Pancreas (tissue), 10 donors: ENCODE measurements at regions of chr3 and their contacts with region 1.

Region 1: DNA sequence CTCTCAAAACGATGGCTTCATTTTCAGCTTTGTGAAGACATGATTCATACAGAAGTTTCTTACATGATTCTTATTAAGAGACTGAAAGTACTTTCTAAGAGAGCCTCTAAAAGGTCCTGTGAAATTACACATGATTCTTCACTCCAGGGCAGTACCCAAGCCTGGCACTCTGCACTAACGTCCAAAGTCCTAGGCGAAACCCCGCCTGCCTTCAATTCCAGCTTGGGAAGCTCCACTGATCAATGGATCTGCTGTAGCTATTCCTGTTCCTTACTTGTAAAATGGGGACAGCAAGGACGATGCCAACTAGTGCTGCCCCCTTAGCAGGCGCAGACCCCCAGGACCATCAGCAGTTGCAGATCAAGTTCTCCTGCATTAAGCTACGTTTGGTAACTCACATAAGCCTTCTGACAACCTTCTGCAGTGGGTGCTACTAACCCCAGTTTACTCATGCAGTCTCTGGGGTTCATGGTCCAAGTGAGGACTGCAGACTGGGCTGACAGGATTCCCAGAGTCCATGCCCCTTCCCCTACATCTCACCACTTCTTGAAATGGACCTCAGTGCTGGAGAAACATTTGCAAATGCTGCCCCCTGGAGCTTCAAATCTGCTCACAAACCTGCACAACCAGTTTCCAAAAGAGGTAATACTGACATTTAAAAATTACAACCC is 10.6 kb downstream of the CHCHD4 start:
- DNase-seq: no peak
- ATAC-seq: peak in 2 of 4 donors; percentile 38 to 49
- H3K4me3 ChIP-seq: no peak overlapping the region
- H3K27ac ChIP-seq: no peak overlapping the region
- H3K4me1 ChIP-seq: peaks cover 5 to 14% (median 6%) of the 10 kb centered on the region in 3 donors
- H3K27me3 ChIP-seq: no peaks in the 10 kb centered on the region
- CTCF ChIP-seq: no peak

Region 2: DNA sequence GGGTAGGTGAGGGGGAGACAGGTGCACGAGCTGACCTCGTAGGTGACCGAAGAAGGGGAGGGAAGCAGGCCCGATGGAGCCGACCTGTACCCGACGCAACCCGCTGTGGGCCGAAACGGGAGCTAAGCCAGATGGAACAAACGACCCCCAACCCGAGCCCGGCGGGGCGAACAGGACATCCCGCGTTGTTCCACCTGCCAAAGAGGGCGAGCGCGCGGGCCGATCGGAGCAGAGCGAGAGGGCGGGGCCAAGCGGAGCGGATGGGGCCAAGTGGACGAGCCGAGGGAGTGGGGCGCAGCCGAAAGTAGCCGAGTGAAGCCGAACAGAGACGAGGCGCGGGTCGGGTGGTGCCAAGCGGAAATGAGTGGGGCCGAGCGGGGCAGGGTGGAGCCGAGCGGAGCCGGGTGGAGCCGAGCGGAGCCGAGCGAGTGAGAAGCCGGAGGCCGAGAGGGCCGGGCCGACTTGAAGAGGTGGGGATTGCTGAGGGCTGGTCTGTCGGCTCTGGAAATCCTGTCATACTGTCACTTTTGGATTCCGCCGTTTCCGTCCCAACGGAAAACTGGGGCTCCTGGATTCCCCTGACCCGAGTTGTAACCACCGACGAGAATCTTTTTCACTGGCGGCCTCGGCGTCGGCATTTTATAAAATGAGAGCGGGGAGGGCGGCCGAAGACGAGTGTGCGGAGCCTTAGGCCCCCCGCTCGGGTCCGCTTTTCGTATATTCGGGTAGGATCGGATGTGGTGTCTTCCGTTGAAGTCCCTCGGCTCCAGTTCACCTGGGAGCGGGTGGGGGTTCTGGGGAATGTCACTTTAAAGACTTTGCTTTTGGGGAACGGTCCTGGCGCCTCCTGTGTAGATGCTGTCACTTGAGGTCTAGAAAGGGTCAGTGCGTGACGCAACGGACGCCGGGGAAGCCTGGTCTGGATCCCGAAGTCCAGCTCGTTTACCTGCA is 218.7 kb before region 1 on chr3:
- intact Hi-C with region 1: loop called in 1 of 3 experiments (anchors 10 kb)
- DNase-seq: peak; percentile 93 to 98 (median 96)
- ATAC-seq: peak; percentile 96 to 99 (median 98)
- H3K4me3 ChIP-seq: peak overlapping the region; percentile 24 to 60 (median 52)
- H3K27ac ChIP-seq: no peak overlapping the region
- H3K4me1 ChIP-seq: peaks cover 0 to 7% (median 5%) of the 10 kb centered on the region in 3 donors
- H3K27me3 ChIP-seq: no peaks in the 10 kb centered on the region
- CTCF ChIP-seq: no peak

Region 3: GRCh38 chr3:13972679-13973379 is 141.3 kb before region 1 on chr3:
- intact Hi-C with region 1: no loop called
- DNase-seq: no peak
- ATAC-seq: no peak
- H3K4me3 ChIP-seq: no peak overlapping the region
- H3K27ac ChIP-seq: no peak overlapping the region
- H3K4me1 ChIP-seq: no peaks in the 10 kb centered on the region
- H3K27me3 ChIP-seq: no peaks in the 10 kb centered on the region
- CTCF ChIP-seq: no peak

Region 4: DNA sequence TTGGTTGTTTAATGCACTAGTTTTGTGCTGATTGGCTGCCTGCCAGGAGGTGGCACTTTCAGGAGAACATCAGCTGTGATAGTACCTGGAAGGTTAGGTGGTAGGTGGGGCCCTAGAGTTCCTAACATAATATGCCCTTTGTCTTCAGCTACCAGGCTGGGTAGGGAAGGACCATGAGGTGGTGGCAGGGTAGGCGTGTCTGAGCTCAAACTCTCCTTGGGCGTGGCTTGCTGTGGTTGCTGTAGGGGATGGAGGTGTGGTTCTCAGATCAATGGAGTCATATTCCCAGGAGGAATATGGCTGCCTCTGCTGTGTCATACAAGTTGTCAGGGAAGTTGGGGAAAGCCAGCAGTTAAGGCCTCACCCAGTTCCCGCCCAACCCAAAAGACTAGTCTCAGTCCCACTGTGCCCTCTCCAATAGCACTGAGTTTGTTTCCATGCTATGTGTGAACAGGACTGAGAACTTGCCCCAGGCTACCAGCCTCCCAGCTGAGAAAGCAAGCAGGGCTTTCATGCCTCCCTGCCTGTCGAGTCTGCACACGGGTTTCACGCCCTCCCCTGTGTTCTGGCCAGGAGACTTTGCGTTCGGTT is 97.1 kb before region 1 on chr3:
- intact Hi-C with region 1: no loop called
- DNase-seq: no peak
- ATAC-seq: no peak
- H3K4me3 ChIP-seq: no peak overlapping the region
- H3K27ac ChIP-seq: no peak overlapping the region
- H3K4me1 ChIP-seq: no peaks in the 10 kb centered on the region
- H3K27me3 ChIP-seq: no peaks in the 10 kb centered on the region
- CTCF ChIP-seq: no peak